ENCODE measurements at regions of chr6 and their contacts with region 1.

Region 1: DNA sequence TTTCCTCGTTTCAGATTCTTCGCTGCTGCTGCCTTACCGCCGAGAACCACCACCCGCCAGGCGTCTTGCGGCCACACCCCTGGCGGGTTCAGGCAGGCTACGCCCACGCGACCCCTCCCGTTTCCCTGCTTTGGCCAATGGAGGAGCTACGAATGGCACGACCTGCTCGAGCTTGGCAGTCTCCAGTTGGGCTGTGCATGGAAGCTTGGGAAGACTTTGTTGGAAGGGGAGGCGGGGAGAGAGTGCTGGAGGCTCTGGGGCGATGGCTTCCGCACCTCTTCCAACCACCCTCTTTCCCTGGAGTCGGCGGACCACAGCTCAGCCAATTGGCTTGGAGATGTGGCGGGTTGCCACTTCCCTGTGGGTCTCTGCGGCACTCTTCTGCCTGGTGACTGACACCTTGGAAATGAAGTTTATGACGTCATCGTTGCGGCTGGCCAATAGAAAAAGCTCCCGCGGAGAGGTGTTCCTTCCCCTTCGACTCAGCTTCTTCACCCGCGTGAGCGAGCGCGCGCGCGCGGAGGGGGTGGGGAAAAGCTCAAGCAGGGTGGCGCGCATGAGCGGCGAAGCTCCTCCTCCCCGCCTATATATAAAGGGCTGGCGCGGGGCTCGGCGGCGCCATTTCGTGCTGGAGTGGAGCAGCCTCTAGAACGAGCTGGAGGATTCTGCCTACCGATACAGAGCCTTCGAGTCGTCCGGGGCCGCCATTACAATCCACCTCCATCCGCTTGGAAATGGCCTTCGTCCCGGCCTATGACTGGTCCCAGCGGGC is 3.4 kb downstream of the BRD2 start:
- DNase-seq: peak; percentile 100
- ATAC-seq: peak; percentile 41
- H3K4me3 Mint-ChIP-seq: peak overlapping the region; percentile 94
- H3K27ac Mint-ChIP-seq: peak overlapping the region; percentile 99
- H3K4me1 Mint-ChIP-seq: peaks cover 24% of the 10 kb centered on the region
- H3K27me3 Mint-ChIP-seq: no peaks in the 10 kb centered on the region

Region 2: GRCh38 chr6:32838114-32838958 is 133.4 kb before region 1 on chr6 and contains the start of gene TAP2:
- CTCF ChIA-PET with region 1: interaction called, 62 read pairs
- DNase-seq: peak; percentile 98
- ATAC-seq: peak; percentile 82
- H3K4me3 Mint-ChIP-seq: peak within 1 kb of the TSS; percentile 94
- H3K27ac Mint-ChIP-seq: peak within 1 kb of the TSS; percentile 95
- H3K4me1 Mint-ChIP-seq: peaks cover 77% of the 10 kb centered on the region
- H3K27me3 Mint-ChIP-seq: no peaks in the 10 kb centered on the region
- total RNA-seq, gene TAP2: 242 to 258 TPM

Region 3: GRCh38 chr6:32853541-32854375 is 118.0 kb before region 1 on chr6 and contains the starts of genes PSMB9 and TAP1:
- CTCF ChIA-PET with region 1: interaction called, 29 read pairs
- DNase-seq: peak; percentile 97
- ATAC-seq: peak; percentile 84
- H3K4me3 Mint-ChIP-seq: peak within 1 kb of the TSS; percentile 99
- H3K27ac Mint-ChIP-seq: peak within 1 kb of the TSS; percentile 100
- H3K4me1 Mint-ChIP-seq: peaks cover 61% of the 10 kb centered on the region
- H3K27me3 Mint-ChIP-seq: no peaks in the 10 kb centered on the region
- total RNA-seq, gene PSMB9: 402 to 473 TPM
- total RNA-seq, gene TAP1: 407 to 417 TPM

Region 4: GRCh38 chr6:32894080-32895005 is 77.4 kb before region 1 on chr6:
- CTCF ChIA-PET with region 1: interaction called, 25 read pairs
- DNase-seq: peak; percentile 96
- ATAC-seq: peak; percentile 99
- H3K4me3 Mint-ChIP-seq: peak overlapping the region; percentile 99
- H3K27ac Mint-ChIP-seq: peak overlapping the region; percentile 94
- H3K4me1 Mint-ChIP-seq: peaks cover 37% of the 10 kb centered on the region
- H3K27me3 Mint-ChIP-seq: peaks cover 4% of the 10 kb centered on the region

Region 5: GRCh38 chr6:32940656-32941213 is 31.0 kb before region 1 on chr6 and contains the start of gene HLA-DMB:
- CTCF ChIA-PET with region 1: interaction called, 24 read pairs
- DNase-seq: peak; percentile 80
- ATAC-seq: peak; percentile 94
- H3K4me3 Mint-ChIP-seq: peak within 1 kb of the TSS; percentile 87
- H3K27ac Mint-ChIP-seq: peak within 1 kb of the TSS; percentile 98
- H3K4me1 Mint-ChIP-seq: peaks cover 67% of the 10 kb centered on the region
- H3K27me3 Mint-ChIP-seq: no peaks in the 10 kb centered on the region
- total RNA-seq, gene HLA-DMB: 22.7 to 31.2 TPM